ENCODE measurements at regions of chr4 and their contacts with region 1.

Region 1: GRCh38 chr4:122584519-122584918 is 36.3 kb downstream of the IL21 start:
- DNase-seq: peak; percentile 23
- H3K4me3 Mint-ChIP-seq: peak overlapping the region; percentile 21
- H3K27ac Mint-ChIP-seq: peak overlapping the region; percentile 88
- H3K4me1 Mint-ChIP-seq: peaks cover 46% of the 10 kb centered on the region
- H3K27me3 Mint-ChIP-seq: no peaks in the 10 kb centered on the region

Region 2: DNA sequence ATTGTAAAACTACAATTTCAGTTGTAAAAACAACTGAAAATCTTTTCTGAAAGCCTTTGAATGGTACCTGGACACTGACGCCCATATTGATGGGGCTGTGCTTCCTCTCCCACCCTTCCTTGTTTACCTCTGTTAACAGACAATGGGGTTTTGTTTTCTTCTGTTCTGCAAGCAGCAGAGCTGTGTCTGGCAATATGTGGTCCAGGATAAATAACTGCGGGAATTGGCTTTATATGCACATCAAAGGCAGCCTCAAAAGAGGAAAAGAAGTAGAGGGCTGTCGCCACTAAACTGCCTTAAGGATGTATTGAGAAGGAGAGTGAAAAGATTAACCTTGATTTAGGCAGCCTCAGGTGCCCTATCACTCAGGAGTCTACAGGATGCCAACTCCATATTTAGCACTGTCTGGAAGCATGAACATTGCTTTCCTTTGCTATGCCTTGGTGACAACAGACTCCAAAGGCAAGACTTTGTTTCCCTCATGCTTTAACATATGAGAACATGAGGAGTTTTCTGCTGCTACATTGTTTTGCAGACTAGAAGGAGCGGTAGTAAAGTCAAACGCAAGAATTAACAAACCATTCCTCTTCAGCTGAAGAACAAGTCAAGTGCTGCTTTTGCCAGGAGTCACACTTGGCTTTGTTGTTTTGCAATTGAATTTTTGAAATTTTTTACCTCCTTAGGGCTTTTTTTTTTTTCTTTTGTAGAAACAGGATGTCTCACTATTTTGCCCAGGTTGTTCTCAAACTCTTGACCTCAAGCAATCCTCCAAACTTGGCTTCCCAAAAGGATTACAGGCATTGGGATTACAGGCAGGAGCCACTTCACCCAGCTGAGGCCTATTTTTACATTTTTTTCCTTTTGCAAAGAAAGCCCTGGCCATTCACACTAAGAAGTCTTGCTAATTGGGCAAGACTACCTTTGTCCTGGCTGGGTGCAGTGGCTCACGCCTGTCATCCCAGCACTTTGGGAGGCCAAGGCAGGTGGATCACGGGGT is 33.4 kb after region 1 on chr4:
- CTCF ChIA-PET with region 1: no interaction called
- POLR2A ChIA-PET with region 1: no interaction called
- intact Hi-C with region 1: loop called (anchors 1 kb)
- DNase-seq: no peak
- H3K4me3 Mint-ChIP-seq: peak overlapping the region; percentile 76
- H3K27ac Mint-ChIP-seq: peak overlapping the region; percentile 87
- H3K4me1 Mint-ChIP-seq: peaks cover 70% of the 10 kb centered on the region
- H3K27me3 Mint-ChIP-seq: no peaks in the 10 kb centered on the region

Region 3: DNA sequence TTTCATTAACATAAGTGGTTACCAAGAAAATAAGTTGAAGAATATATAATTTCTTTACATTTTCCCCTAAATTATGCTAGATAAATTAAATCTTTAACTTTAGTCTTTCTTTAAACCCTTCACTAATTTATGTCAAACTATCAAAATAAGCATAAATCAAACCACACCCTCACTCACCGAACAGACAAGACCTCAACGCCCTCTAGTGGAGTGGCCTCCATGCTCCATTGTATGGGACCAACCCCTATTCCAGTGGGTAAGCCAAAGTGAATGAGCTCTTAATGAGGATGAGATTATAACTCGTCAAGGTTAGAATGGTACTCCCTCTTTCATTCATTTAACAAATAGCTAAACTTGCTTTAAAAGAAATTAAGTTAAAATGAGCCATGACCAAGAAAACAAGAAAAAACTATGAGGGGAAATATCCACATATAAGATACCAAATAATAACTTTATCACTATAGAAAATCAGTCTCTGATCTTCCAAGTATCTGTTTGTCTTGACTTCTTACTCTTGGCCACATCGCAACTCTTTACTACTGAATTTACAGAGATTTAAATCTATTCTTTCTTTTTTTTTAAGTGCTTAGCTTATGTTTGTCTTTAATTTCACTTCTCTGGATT is 132.4 kb after region 1 on chr4:
- CTCF ChIA-PET with region 1: interaction called, 12 read pairs
- POLR2A ChIA-PET with region 1: no interaction called
- intact Hi-C with region 1: no loop called
- DNase-seq: peak; percentile 85
- H3K4me3 Mint-ChIP-seq: peak overlapping the region; percentile 37
- H3K27ac Mint-ChIP-seq: peak overlapping the region; percentile 23
- H3K4me1 Mint-ChIP-seq: peaks cover 36% of the 10 kb centered on the region
- H3K27me3 Mint-ChIP-seq: peaks cover 2% of the 10 kb centered on the region